Naive thymus-derived CD4-positive, alpha-beta T cell (primary cell): ENCODE measurements at regions of chr19 and their contacts with region 1.

Region 1: DNA sequence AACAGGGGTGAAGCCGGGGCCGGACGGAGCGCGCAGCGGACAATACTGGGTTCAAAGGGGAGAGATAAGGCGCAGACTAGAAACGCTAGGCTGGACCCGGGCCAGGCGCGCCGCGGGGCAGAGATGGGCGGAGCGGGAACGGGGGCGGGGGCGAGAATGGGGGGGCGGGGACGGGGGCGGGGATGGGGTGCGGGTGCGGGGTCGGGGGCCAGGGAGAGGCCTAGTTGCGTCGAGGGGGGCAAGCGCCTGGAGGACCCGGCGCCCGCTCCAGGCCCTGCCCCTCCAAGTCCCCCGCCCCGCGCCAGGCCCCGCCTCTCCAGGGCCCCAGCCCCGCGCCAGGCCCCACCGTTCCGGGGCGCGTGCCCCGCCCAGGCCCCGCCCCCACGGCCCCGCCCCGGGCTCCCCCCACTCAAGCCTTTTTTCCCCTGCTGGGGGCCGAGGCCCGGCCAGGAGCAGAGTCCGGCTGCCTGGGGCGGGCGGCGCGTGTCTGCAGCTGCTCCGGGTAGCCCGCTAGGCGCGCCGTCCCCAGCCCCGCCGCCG is at the start of gene CERS4:
- DNase-seq: peak in 4 of 9 donors; percentile 69 to 82 (median 77)
- ATAC-seq: peak; percentile 92
- H3K4me3 ChIP-seq: peak within 1 kb of the TSS; percentile 84
- H3K4me3 Mint-ChIP-seq: peak within 1 kb of the TSS; percentile 72 to 94 (median 90)
- H3K27ac ChIP-seq: peak within 1 kb of the TSS; percentile 96
- H3K27ac Mint-ChIP-seq: peak within 1 kb of the TSS; percentile 72 to 96 (median 83)
- H3K4me1 ChIP-seq: peaks cover 5 to 17% of the 10 kb centered on the region in 2 donors
- H3K4me1 Mint-ChIP-seq: peaks cover 19 to 30% (median 27%) of the 10 kb centered on the region in 7 donors
- H3K27me3 ChIP-seq: no peaks in the 10 kb centered on the region
- H3K27me3 Mint-ChIP-seq: peaks cover 0 to 9% (median 0%) of the 10 kb centered on the region in 5 donors
- total RNA-seq, gene CERS4: 17.2 to 32.4 (median 27.4) TPM

Region 2: DNA sequence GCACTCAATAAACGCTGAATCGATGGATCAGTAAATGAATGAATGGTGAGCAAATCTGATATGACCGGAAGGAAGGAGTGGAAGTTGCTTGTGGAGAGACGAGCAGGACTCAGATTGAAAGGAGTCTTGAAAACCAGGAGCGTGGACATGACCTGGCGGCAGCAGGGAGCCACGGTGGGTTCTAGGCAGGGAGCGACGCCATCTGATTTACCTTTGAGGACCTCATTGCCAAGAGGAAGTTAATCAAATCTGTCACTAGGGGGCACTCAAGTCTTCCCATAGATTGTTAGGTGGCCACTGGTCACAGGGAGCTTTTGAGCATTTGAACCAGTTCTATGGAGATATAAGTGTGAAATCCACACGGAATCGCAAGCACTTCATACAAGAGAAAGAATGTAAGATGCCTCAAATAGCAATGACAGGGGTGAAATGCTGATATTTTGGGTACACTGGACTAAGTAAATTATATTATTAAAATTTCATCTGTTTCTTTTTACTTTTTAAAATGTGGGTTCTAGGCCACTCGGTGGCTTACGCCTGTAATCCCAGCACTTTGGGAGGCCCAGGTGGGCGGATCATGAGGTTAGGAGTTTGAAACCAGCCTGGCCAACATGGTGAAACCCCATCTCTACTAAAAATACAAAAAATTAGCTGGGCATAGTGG is 50.4 kb before region 1 on chr19:
- CTCF ChIA-PET with region 1: interaction called, 4 read pairs
- POLR2A ChIA-PET with region 1: no interaction called
- intact Hi-C with region 1: loop called in 1 of 2 experiments (anchors 1 kb)
- DNase-seq: peak in 8 of 9 donors; percentile 34 to 70 (median 60)
- ATAC-seq: peak; percentile 69
- H3K4me3 ChIP-seq: no peak overlapping the region
- H3K4me3 Mint-ChIP-seq: no peak overlapping the region
- H3K27ac ChIP-seq: no peak overlapping the region
- H3K27ac Mint-ChIP-seq: no peak overlapping the region
- H3K4me1 ChIP-seq: no peaks in the 10 kb centered on the region
- H3K4me1 Mint-ChIP-seq: peaks cover 0 to 12% (median 3%) of the 10 kb centered on the region in 7 donors
- H3K27me3 ChIP-seq: no peaks in the 10 kb centered on the region
- H3K27me3 Mint-ChIP-seq: peaks cover 4 to 27% (median 23%) of the 10 kb centered on the region in 5 donors

Region 3: GRCh38 chr19:8180061-8180460 is 28.9 kb before region 1 on chr19:
- CTCF ChIA-PET with region 1: no interaction called
- POLR2A ChIA-PET with region 1: interaction called, 15 read pairs
- intact Hi-C with region 1: loop called in 1 of 2 experiments (anchors 1 kb)
- DNase-seq: no peak
- ATAC-seq: no peak
- H3K4me3 ChIP-seq: no peak overlapping the region
- H3K4me3 Mint-ChIP-seq: no peak overlapping the region
- H3K27ac ChIP-seq: no peak overlapping the region
- H3K27ac Mint-ChIP-seq: no peak overlapping the region
- H3K4me1 ChIP-seq: peaks cover 6 to 14% of the 10 kb centered on the region in 2 donors
- H3K4me1 Mint-ChIP-seq: peaks cover 0 to 15% (median 10%) of the 10 kb centered on the region in 7 donors
- H3K27me3 ChIP-seq: no peaks in the 10 kb centered on the region
- H3K27me3 Mint-ChIP-seq: no peaks in the 10 kb centered on the region

Region 4: GRCh38 chr19:8194528-8195267 is 14.3 kb before region 1 on chr19:
- CTCF ChIA-PET with region 1: interaction called, 9 read pairs
- POLR2A ChIA-PET with region 1: interaction called, 17 read pairs
- intact Hi-C with region 1: loop called (anchors 1 kb)
- DNase-seq: peak in 5 of 9 donors; percentile 20 to 40 (median 34)
- ATAC-seq: peak; percentile 60
- H3K4me3 ChIP-seq: peak overlapping the region; percentile 19
- H3K4me3 Mint-ChIP-seq: peak overlapping the region; percentile 63 to 93 (median 82)
- H3K27ac ChIP-seq: peak overlapping the region; percentile 62
- H3K27ac Mint-ChIP-seq: peak overlapping the region; percentile 87 to 98 (median 93)
- H3K4me1 ChIP-seq: peaks cover 15 to 20% of the 10 kb centered on the region in 2 donors
- H3K4me1 Mint-ChIP-seq: peaks cover 42 to 53% (median 49%) of the 10 kb centered on the region in 7 donors
- H3K27me3 ChIP-seq: no peaks in the 10 kb centered on the region
- H3K27me3 Mint-ChIP-seq: no peaks in the 10 kb centered on the region

Region 5: DNA sequence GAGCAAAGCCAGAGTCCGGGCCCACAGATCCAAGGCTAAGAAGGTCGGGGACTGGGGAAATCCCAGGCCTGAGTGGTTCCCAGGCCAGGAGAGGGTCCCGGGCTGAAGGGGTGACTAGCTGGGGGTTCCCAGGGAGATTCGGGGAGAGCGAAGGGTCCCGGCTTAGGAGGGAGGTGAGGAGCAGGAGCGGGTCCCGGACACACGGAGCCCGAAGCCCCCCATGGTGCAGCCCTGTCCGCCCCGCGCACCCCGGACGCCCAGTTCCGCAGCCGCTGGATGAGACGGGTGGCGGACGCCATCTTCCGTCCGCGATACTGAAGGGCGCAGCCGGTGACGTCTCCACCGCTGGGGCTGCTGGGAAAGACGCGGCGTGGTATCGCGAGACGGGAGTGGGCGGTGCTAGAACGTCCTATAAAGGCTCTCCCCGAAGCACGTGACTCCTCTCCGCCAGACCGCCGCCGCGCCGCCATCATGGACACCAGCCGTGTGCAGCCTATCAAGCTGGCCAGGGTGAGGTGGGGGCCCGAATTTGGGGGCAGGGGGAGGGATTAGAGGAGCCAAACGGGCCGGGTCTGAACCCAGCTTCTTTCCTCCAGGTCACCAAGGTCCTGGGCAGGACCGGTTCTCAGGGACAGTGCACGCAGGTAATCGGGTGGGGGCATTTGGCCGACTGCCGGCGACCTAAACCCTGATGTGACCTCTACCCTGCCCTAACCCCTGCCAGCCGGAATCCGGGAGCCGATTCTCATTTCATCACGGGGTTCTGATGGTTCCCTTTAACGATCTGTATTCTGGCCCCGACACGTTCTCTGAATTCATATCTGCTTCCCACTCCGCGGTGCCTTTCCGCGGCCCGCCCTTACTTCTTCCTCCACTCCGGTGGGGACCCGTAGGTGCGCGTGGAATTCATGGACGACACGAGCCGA is 112.3 kb after region 1 on chr19 and contains the starts of genes NDUFA7 and RPS28:
- CTCF ChIA-PET with region 1: no interaction called
- POLR2A ChIA-PET with region 1: interaction called, 3 read pairs
- intact Hi-C with region 1: loop called in 1 of 2 experiments (anchors 2 kb)
- DNase-seq: peak; percentile 94 to 97 (median 96)
- ATAC-seq: peak; percentile 98
- H3K4me3 ChIP-seq: peak within 1 kb of the TSS; percentile 98
- H3K4me3 Mint-ChIP-seq: peak within 1 kb of the TSS; percentile 90 to 99 (median 98)
- H3K27ac ChIP-seq: peak within 1 kb of the TSS; percentile 96
- H3K27ac Mint-ChIP-seq: peak within 1 kb of the TSS; percentile 94 to 99 (median 98)
- H3K4me1 ChIP-seq: peaks cover 25% of the 10 kb centered on the region in 2 donors
- H3K4me1 Mint-ChIP-seq: peaks cover 16 to 44% (median 29%) of the 10 kb centered on the region in 7 donors
- H3K27me3 ChIP-seq: no peaks in the 10 kb centered on the region
- H3K27me3 Mint-ChIP-seq: no peaks in the 10 kb centered on the region
- total RNA-seq, gene NDUFA7: 16.8 to 50.3 (median 30.0) TPM
- total RNA-seq, gene RPS28: 2,319 to 4,111 (median 3,327) TPM